ENCODE measurements at regions of chr12 and their contacts with region 1.

Region 1: DNA sequence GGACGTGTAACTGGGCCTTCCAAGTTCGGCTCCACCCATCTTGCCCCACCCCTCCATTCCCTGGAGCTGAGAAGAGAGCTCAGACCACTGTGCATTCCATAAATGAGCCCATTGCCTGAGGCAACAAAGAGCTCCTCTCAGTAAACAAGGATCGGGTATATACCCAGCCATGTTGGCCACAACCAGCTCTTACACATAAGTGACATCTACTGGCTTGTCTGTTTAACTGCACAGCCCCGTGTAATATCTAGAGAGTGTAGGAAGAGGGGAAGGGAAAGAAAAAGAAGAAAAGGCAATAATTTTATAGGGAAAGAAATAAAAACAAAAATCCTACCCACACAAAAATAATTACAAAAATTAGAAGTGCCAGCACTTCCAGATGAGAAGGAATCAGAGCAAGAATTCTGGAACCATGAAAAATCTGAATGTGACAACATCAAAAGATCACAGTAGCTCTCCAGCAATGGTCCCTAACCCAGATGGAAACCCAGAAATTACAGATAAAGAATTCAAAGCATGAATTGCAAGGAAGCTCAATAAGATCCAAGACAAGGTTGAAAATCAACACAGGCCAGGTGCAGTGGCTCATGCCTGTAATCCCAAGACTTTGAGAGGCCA is 308.1 kb downstream of the RPAP3 start:
- DNase-seq: peak; percentile 72
- H3K4me3 Mint-ChIP-seq: peak overlapping the region; percentile 33
- H3K27ac Mint-ChIP-seq: peak overlapping the region; percentile 100
- H3K4me1 Mint-ChIP-seq: peaks cover 95% of the 10 kb centered on the region
- H3K27me3 Mint-ChIP-seq: no peaks in the 10 kb centered on the region

Region 2: GRCh38 chr12:47032644-47033043 is 365.1 kb before region 1 on chr12:
- CTCF ChIA-PET with region 1: interaction called, 56 read pairs
- intact Hi-C with region 1: loop called (anchors 1 kb)
- DNase-seq: peak; percentile 34
- H3K4me3 Mint-ChIP-seq: no peak overlapping the region
- H3K27ac Mint-ChIP-seq: peak overlapping the region; percentile 79
- H3K4me1 Mint-ChIP-seq: peaks cover 43% of the 10 kb centered on the region
- H3K27me3 Mint-ChIP-seq: no peaks in the 10 kb centered on the region

Region 3: DNA sequence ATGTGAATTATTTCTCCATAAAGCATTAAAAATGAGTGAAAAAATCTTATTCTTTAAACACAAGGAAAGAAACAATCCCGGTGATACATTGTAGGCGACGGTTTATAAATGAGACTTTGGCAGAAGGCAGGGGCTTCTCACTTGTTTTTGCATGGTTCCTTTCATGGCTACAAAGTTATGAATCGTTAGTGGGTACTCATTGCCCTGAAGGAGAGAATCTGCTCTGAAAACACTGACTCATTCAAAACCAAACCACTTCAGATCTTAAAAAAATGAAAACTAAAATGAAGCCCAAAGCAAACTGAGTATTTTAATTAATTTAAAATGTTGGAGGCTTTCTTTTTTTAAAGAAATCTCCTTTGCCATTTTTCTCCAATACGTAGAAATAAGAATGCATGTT is 276.6 kb before region 1 on chr12:
- CTCF ChIA-PET with region 1: no interaction called
- intact Hi-C with region 1: loop called (anchors 2 kb)
- DNase-seq: no peak
- H3K4me3 Mint-ChIP-seq: no peak overlapping the region
- H3K27ac Mint-ChIP-seq: peak overlapping the region; percentile 79
- H3K4me1 Mint-ChIP-seq: peaks cover 41% of the 10 kb centered on the region
- H3K27me3 Mint-ChIP-seq: no peaks in the 10 kb centered on the region

Region 4: GRCh38 chr12:47216150-47216677 is 181.6 kb before region 1 on chr12:
- CTCF ChIA-PET with region 1: interaction called, 20 read pairs
- intact Hi-C with region 1: loop called (anchors 1 kb)
- DNase-seq: peak; percentile 83
- H3K4me3 Mint-ChIP-seq: peak overlapping the region; percentile 94
- H3K27ac Mint-ChIP-seq: peak overlapping the region; percentile 100
- H3K4me1 Mint-ChIP-seq: peaks cover 12% of the 10 kb centered on the region
- H3K27me3 Mint-ChIP-seq: no peaks in the 10 kb centered on the region

Region 5: GRCh38 chr12:47307680-47308399 is 89.9 kb before region 1 on chr12:
- CTCF ChIA-PET with region 1: interaction called, 18 read pairs
- intact Hi-C with region 1: loop called (anchors 1 kb)
- DNase-seq: peak; percentile 74
- H3K4me3 Mint-ChIP-seq: peak overlapping the region; percentile 91
- H3K27ac Mint-ChIP-seq: peak overlapping the region; percentile 98
- H3K4me1 Mint-ChIP-seq: peaks cover 73% of the 10 kb centered on the region
- H3K27me3 Mint-ChIP-seq: no peaks in the 10 kb centered on the region

Region 6: GRCh38 chr12:47383942-47384341 is 13.8 kb before region 1 on chr12:
- CTCF ChIA-PET with region 1: interaction called, 16 read pairs
- intact Hi-C with region 1: no loop called
- DNase-seq: peak; percentile 62
- H3K4me3 Mint-ChIP-seq: no peak overlapping the region
- H3K27ac Mint-ChIP-seq: peak overlapping the region; percentile 96
- H3K4me1 Mint-ChIP-seq: peaks cover 87% of the 10 kb centered on the region
- H3K27me3 Mint-ChIP-seq: no peaks in the 10 kb centered on the region

Region 7: DNA sequence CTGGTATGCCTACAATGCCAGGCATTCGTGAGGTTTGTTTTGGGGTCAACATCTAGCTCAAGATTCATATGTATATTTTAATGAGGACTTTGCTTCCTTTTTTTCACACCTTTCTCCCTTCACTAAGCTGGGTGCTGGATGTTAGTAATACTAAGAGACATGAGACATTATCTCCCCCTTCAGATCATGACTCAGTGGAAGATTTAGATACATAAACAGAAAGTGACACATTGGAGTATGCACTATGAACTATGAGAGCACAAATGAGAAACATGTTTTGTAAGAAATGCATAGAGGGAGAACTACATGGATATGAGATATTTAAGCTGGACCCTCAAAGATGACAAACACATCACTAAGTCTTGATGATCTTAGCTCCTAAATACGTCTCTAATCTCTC is 21.7 kb after region 1 on chr12:
- CTCF ChIA-PET with region 1: interaction called, 21 read pairs
- intact Hi-C with region 1: loop called (anchors 1 kb)
- DNase-seq: no peak
- H3K4me3 Mint-ChIP-seq: no peak overlapping the region
- H3K27ac Mint-ChIP-seq: peak overlapping the region; percentile 83
- H3K4me1 Mint-ChIP-seq: peaks cover 51% of the 10 kb centered on the region
- H3K27me3 Mint-ChIP-seq: no peaks in the 10 kb centered on the region